Cardiac septum (tissue), 1 donor: ENCODE measurements at regions of chr11 and their contacts with region 1.

Region 1: DNA sequence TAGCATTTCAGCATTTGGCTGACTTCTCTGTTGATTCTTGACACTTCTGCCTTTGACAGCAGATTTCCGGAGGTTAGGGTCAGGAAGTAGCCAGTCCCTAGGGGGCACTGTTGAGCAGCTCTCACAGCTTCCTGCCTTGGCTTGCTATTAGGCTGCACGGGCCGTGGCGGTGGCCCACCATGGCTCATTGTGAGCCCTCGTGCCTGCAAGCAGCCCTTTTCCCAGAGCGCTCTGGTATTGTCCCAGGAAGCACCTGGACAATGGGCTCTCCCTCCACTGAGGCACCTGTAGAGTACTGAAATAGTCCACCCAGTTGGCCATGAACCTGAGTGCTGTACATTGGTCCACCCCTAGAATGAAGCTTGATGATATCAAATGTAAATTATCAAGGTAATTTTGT is 100.2 kb upstream of the GAL start:
- DNase-seq: no peak

Region 2: GRCh38 chr11:68257475-68258362 is 326.4 kb before region 1 on chr11:
- intact Hi-C with region 1: no loop called
- DNase-seq: peak; percentile 96

Region 3: GRCh38 chr11:68459886-68460740 is 124.0 kb before region 1 on chr11:
- intact Hi-C with region 1: loop called (anchors 5 kb)
- DNase-seq: peak; percentile 98

Region 4: DNA sequence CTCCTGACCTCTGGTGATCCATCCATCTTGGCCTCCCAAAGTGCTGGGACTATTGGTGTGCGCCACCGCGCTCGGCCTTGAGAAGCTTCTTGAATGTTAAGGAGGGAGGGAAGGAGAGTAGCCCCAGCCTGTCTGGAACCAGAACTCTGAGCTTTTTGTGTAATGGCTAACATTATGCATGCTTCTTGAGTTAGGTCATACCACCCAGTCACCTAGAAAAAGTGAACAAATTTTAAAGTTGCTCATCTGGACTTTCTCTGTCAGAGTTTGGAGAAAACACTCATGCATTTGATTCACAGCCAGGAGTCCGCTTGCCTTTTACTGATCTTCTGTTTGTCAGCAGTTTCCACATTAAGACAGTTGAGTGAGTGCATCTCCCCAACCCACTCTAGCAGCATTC is 41.5 kb before region 1 on chr11:
- intact Hi-C with region 1: loop called (anchors 5 kb)
- DNase-seq: no peak